CD14-positive monocyte (primary cell): ENCODE measurements at regions of chr3 and their contacts with region 1.

Region 1: DNA sequence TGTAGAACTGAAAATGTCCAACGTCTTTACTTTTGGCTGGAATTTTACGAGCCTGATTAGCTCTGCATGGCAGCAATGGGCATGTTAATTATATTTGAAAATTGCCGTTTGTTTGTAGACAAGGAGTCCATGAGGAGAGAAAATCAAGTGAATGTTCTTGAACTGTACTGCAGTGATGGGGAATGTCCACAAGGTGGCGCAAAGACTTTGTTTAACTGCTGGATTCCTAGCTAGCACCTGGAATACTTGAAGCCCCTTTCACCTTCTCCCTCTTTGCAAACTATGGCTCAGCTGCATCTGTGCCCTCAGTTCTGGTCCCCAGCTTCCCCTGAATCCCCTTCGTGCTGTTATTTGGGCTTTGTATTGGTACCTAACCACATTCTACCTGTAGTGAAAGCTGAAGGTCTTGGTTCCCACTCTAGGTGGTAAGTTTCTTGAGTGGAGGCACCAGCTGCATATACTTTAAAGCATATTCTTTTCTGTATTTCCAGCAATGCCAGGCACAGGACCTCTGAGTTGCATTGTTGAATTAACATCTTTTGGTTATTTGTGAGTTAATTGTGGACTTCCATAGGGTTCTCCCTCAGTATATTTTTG is 25.3 kb downstream of the EXOG start:
- DNase-seq: peak; percentile 35 to 66 (median 54)
- H3K4me3 ChIP-seq: no peak overlapping the region
- H3K4me3 Mint-ChIP-seq: no peak overlapping the region
- H3K27ac ChIP-seq: no peak overlapping the region
- H3K27ac Mint-ChIP-seq: no peak overlapping the region
- H3K4me1 ChIP-seq: no peaks in the 10 kb centered on the region
- H3K4me1 Mint-ChIP-seq: peaks cover 4% of the 10 kb centered on the region
- H3K27me3 ChIP-seq: no peaks in the 10 kb centered on the region
- H3K27me3 Mint-ChIP-seq: peaks cover 0 to 2% (median 0%) of the 10 kb centered on the region in 3 donors
- CTCF ChIP-seq: peak; percentile 94

Region 2: DNA sequence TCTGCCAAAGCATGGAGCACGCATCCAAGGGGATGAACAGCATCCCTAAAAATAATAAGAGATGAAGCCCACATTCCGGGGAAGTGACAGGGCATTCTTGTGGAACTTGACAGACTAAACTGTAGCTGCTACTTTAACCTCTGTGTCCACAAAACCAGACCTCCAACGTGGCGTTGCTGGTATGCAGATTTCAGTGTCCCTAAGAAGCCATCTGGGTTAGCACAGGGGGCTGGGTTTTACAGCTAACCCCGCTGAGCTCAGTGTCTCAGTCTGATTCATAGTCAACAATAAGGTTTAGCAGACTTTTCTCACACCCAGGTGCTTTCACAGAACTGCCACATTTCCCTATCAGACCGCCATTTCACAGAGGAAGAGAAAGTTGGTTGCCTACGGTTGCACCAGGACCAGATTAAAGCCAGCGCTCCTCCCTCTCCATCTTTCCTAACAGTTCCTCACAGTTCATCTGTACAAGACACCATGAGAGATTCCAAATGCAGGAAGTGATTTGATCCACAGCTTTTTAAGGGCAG is 721.4 kb before region 1 on chr3:
- intact Hi-C with region 1: no loop called
- DNase-seq: no peak
- H3K4me3 ChIP-seq: no peak overlapping the region
- H3K4me3 Mint-ChIP-seq: no peak overlapping the region
- H3K27ac ChIP-seq: no peak overlapping the region
- H3K27ac Mint-ChIP-seq: no peak overlapping the region
- H3K4me1 ChIP-seq: no peaks in the 10 kb centered on the region
- H3K4me1 Mint-ChIP-seq: no peaks in the 10 kb centered on the region
- H3K27me3 ChIP-seq: no peaks in the 10 kb centered on the region
- H3K27me3 Mint-ChIP-seq: peaks cover 0 to 4% (median 0%) of the 10 kb centered on the region in 3 donors
- CTCF ChIP-seq: no peak

Region 3: GRCh38 chr3:38992117-38992760 is 470.8 kb after region 1 on chr3:
- intact Hi-C with region 1: loop called in 1 of 2 experiments (anchors 10 kb)
- DNase-seq: no peak
- H3K4me3 ChIP-seq: no peak overlapping the region
- H3K4me3 Mint-ChIP-seq: no peak overlapping the region
- H3K27ac ChIP-seq: no peak overlapping the region
- H3K27ac Mint-ChIP-seq: no peak overlapping the region
- H3K4me1 ChIP-seq: no peaks in the 10 kb centered on the region
- H3K4me1 Mint-ChIP-seq: no peaks in the 10 kb centered on the region
- H3K27me3 ChIP-seq: no peaks in the 10 kb centered on the region
- H3K27me3 Mint-ChIP-seq: peaks cover 3 to 8% (median 5%) of the 10 kb centered on the region in 3 donors
- CTCF ChIP-seq: no peak

Region 4: DNA sequence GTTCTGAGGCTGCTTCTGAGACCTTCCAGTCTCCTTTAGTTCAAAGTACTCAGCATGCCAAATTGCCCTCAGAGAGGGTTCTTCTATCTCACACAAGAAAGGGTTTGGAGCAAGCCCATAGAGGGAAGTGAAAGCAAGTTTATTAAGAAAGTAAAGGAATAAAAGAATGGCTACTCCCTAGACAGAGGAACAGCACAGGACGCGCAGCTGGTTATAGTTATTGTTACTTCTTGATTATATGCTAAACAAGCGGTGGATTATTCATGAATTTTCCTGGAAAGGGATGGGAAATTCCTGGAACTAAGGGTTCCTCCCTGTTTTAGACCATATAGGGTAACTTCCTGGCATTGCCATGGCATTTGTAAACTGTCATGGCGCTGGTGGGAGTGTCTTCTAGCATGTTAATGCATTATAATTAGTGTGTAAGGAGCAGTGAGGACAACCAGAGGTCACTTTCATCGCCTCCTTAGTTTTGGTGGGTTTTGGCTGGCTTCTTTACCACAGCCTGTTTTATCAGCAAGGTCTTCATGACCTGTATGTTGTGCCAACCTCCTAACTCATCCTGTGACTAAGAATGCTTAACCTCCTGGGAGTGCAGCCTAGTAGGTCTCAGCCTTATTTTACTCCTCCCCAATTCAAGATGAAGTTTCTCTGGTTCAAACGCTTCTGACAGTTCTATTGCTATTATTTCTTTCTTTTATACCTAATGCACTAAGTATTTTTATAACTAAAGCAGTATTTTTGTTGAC is 503.9 kb after region 1 on chr3:
- intact Hi-C with region 1: loop called in 1 of 2 experiments (anchors 5 kb)
- DNase-seq: peak in 2 of 3 donors; percentile 11 to 12
- H3K4me3 ChIP-seq: no peak overlapping the region
- H3K4me3 Mint-ChIP-seq: no peak overlapping the region
- H3K27ac ChIP-seq: no peak overlapping the region
- H3K27ac Mint-ChIP-seq: peak overlapping the region in 2 of 7 donors; percentile 32 to 33
- H3K4me1 ChIP-seq: peaks cover 6% of the 10 kb centered on the region in 2 donors
- H3K4me1 Mint-ChIP-seq: peaks cover 8% of the 10 kb centered on the region
- H3K27me3 ChIP-seq: no peaks in the 10 kb centered on the region
- H3K27me3 Mint-ChIP-seq: peaks cover 0 to 5% (median 4%) of the 10 kb centered on the region in 3 donors
- CTCF ChIP-seq: no peak